GM13976 (cell line): ENCODE measurements at regions of chr18 and their contacts with region 1.

Region 1: GRCh38 chr18:79047556-79048247 is 21.5 kb upstream of the ATP9B start:
- DNase-seq: no peak
- CTCF ChIP-seq: no peak

Region 2: DNA sequence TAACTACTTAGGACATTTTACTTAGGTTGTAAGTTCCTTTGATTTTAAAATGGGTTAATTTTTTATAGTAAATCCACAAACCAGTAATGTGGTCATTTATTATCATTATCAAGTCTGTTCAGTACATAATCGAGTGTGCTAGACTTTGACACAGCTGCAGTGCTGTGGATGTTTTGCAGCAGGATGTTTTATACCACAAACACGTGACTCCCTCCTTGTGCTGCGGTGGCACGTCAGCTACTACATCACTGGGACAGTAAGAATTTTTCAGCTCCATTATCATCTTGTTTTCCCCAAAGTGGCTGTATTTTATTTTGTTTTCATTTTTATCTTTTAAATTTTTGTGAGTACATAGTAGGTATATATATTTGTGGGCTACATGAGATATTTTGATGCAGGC is 91.5 kb after region 1 on chr18:
- in situ Hi-C with region 1: loop called (anchors 25 kb)
- DNase-seq: no peak
- CTCF ChIP-seq: no peak